ENCODE measurements at regions of chr2 and their contacts with region 1.

Region 1: GRCh38 chr2:159758686-159759085 is 39.3 kb downstream of the CD302 start:
- DNase-seq: no peak
- H3K4me3 ChIP-seq: no peak overlapping the region
- H3K27ac ChIP-seq: no peak overlapping the region
- H3K4me1 ChIP-seq: no peaks in the 10 kb centered on the region
- CTCF ChIP-seq: no peak

Region 2: GRCh38 chr2:159736048-159736447 is 22.6 kb before region 1 on chr2:
- CTCF ChIA-PET with region 1: no interaction called
- POLR2A ChIA-PET with region 1: interaction called, 10 read pairs
- intact Hi-C with region 1: no loop called
- DNase-seq: no peak
- H3K4me3 ChIP-seq: no peak overlapping the region
- H3K27ac ChIP-seq: no peak overlapping the region
- H3K4me1 ChIP-seq: no peaks in the 10 kb centered on the region
- CTCF ChIP-seq: no peak

Region 3: DNA sequence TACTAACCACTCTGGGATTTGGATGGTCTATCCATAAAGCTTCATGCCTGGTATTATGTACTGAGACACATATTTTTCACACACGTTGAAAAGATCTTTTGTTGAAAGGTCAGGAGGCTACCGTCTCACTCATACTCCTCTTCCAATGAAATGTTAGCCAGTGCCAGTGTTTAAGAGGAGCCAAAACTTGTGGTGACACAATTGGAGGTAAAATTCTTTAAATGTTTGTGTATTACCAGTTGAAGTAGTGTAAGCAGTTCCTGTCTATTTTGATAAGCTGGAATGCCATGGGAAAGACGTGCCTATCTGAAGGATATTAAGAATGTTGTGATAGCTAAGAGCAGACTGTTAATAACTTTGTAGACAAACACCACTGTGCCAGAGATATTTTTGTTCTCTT is 14.3 kb before region 1 on chr2:
- CTCF ChIA-PET with region 1: no interaction called
- POLR2A ChIA-PET with region 1: interaction called, 12 read pairs
- intact Hi-C with region 1: no loop called
- DNase-seq: no peak
- H3K4me3 ChIP-seq: no peak overlapping the region
- H3K27ac ChIP-seq: no peak overlapping the region
- H3K4me1 ChIP-seq: no peaks in the 10 kb centered on the region
- CTCF ChIP-seq: no peak

Region 4: GRCh38 chr2:159904959-159905305 is 146.2 kb after region 1 on chr2:
- CTCF ChIA-PET with region 1: no interaction called
- POLR2A ChIA-PET with region 1: no interaction called
- intact Hi-C with region 1: no loop called
- DNase-seq: no peak
- H3K4me3 ChIP-seq: no peak overlapping the region
- H3K27ac ChIP-seq: no peak overlapping the region
- H3K4me1 ChIP-seq: no peaks in the 10 kb centered on the region
- CTCF ChIP-seq: no peak